Right lobe of liver (tissue), 6 donors: ENCODE measurements at regions of chr16 and their contacts with region 1.

Region 1: DNA sequence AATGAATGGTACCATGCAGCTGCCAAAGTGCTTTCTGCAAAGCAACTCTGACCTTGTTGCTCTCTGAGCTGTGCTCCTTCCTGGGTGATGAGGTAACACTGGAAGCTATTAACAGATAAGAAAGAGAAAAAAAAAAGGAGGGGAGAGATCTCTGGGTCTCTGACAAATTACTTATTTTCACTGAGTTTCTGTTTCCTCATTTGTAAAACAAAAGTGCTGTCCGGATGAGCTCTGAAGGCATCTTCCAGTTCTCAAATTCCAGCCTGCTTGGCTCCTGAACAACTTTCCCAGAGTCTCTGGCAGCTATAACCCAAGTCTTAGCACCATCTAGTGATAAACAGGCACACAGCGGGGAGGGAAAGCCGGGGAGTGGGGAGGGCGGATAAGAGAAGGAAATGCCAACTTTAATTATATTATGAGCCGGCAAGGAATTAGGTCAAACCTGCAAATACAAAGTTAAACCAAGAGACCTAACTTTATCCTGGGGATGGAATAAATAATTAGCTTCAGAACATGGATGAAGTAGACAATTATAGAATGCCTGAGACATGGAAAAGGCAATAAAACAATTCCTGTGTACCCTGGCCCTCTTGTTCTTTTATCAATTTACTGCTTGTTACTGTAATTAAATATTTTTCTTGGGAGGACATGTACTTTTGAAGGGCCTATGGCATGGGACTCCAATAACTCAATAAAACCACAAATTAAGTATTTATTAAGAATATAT is 61.3 kb upstream of the KIFC3 start:
- DNase-seq: peak; percentile 64 to 71 (median 69)
- ATAC-seq: peak; percentile 68 to 88 (median 79)
- H3K4me3 ChIP-seq: no peak overlapping the region
- H3K27ac ChIP-seq: peak overlapping the region; percentile 11 to 70 (median 35)
- H3K4me1 ChIP-seq: peaks cover 0 to 37% (median 17%) of the 10 kb centered on the region in 4 donors
- H3K27me3 ChIP-seq: no peaks in the 10 kb centered on the region
- CTCF ChIP-seq: peak; percentile 26 to 62 (median 50)
- POLR2A ChIP-seq: no peak

Region 2: DNA sequence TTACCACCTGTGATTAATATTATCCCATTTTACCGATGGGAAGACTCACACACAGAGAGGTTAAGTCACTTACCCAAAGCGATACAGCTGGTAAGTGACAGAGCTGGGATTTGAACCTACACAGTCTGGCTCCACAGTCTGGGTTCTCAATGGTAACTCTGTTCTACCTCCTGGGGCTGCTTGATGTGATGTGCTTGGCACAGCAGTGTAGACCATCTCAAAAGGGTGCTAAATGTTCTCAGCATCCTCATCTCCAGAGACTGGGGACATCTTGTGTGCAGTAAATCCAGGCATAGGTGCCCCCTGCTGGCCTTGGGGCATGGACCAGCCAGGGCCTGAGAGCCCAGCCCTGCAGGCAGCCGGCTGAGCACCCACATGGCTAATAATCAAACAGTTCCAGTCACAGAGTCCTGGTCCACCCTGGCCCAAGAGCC is 143.4 kb before region 1 on chr16:
- intact Hi-C with region 1: no loop called
- DNase-seq: peak; percentile 84 to 86 (median 85)
- ATAC-seq: peak; percentile 98 to 99 (median 98)
- H3K4me3 ChIP-seq: no peak overlapping the region
- H3K27ac ChIP-seq: no peak overlapping the region
- H3K4me1 ChIP-seq: no peaks in the 10 kb centered on the region
- H3K27me3 ChIP-seq: no peaks in the 10 kb centered on the region
- CTCF ChIP-seq: peak; percentile 79 to 91 (median 87)
- POLR2A ChIP-seq: no peak

Region 3: GRCh38 chr16:57795431-57795878 is 68.1 kb before region 1 on chr16:
- intact Hi-C with region 1: loop called in 1 of 2 experiments (anchors 10 kb)
- DNase-seq: peak in 1 of 3 donors; percentile 67
- ATAC-seq: peak in 2 of 4 donors; percentile 1 to 7
- H3K4me3 ChIP-seq: no peak overlapping the region
- H3K27ac ChIP-seq: peak overlapping the region in 1 of 3 donors; percentile 29
- H3K4me1 ChIP-seq: peaks cover 0 to 57% (median 28%) of the 10 kb centered on the region in 4 donors
- H3K27me3 ChIP-seq: no peaks in the 10 kb centered on the region
- CTCF ChIP-seq: peak; percentile 33 to 50 (median 47)
- POLR2A ChIP-seq: peak; percentile 20

Region 4: GRCh38 chr16:57906382-57907316 is 43.1 kb after region 1 on chr16:
- intact Hi-C with region 1: no loop called
- DNase-seq: no peak
- ATAC-seq: peak; percentile 39 to 43 (median 42)
- H3K4me3 ChIP-seq: no peak overlapping the region
- H3K27ac ChIP-seq: no peak overlapping the region
- H3K4me1 ChIP-seq: no peaks in the 10 kb centered on the region
- H3K27me3 ChIP-seq: no peaks in the 10 kb centered on the region
- CTCF ChIP-seq: peak; percentile 17 to 38 (median 34)
- POLR2A ChIP-seq: no peak